ENCODE measurements at regions of chr13 and their contacts with region 1.

Region 1: GRCh38 chr13:33610471-33611015 is 207.4 kb upstream of the RFC3 start:
- DNase-seq: peak; percentile 79
- H3K4me3 Mint-ChIP-seq: peak overlapping the region; percentile 89
- H3K27ac Mint-ChIP-seq: peak overlapping the region; percentile 87
- H3K4me1 Mint-ChIP-seq: peaks cover 38% of the 10 kb centered on the region
- H3K27me3 Mint-ChIP-seq: no peaks in the 10 kb centered on the region

Region 2: DNA sequence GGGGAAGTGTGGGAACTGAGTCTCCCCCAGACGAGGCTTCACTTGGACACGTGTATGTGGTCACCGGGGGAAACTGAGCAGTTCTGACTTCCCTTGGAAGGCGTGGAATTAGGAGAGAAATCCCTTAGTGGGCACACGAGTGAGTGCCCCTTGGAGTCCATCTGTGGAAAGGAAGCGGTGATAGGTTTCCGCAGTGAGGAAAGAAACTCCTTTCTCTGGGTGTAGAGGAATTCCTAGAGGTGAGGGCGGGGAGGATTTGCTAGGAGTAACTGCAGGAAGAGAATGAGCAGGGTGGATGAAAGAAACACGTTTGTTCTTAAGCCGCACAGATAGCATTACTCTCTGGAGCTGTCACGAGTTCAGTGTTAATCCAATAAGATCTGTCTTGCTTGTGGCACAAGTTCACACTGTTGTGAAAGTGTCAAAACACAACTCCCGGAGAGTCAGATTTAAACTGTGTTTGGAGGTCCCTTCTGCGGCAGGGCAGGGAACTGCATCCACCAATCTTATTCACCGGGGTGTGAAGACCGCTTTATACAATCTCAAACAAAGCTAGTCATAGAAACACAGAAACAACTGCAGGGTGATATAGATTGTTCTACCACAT is 593.1 kb before region 1 on chr13:
- intact Hi-C with region 1: loop called (anchors 10 kb)
- DNase-seq: peak; percentile 84
- H3K4me3 Mint-ChIP-seq: peak overlapping the region; percentile 76
- H3K27ac Mint-ChIP-seq: peak overlapping the region; percentile 68
- H3K4me1 Mint-ChIP-seq: peaks cover 11% of the 10 kb centered on the region
- H3K27me3 Mint-ChIP-seq: peaks cover 59% of the 10 kb centered on the region

Region 3: DNA sequence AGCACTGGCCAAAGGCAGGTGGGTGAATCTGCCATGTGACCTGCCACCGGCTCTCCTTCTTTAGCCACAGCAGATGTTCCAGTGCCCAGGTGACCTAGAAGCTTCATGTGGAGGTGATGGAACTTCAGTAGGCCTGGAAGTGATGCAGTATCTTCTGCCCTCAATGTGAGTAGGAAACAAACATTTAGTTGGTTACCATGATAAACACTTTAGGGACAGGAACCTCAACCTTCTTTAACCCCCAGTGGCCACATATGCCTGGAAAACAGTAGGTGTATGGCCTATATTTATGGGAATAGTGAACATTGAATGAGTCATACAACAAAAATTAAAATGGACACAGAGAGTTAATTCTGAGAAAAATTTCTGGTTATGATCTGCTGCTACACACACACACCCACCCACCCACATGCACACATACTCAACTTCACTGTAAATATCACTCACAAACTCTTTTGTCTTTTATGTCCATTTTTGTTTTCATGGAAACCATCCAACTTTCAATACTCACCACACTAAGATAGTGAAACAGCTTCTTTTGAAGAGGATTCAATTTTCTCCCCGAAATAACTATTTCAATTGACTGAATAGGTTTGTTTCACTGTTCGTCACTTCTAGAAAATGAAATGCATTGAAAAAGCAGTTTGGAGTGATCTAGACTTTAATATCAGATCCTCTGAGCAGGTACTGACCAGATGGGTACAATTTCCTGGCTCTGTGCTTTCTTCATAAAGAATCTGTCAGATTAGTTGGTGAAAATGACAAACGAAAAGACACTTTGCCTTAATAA is 422.3 kb before region 1 on chr13:
- intact Hi-C with region 1: loop called (anchors 2 kb)
- DNase-seq: peak; percentile 59
- H3K4me3 Mint-ChIP-seq: peak overlapping the region; percentile 13
- H3K27ac Mint-ChIP-seq: peak overlapping the region; percentile 99
- H3K4me1 Mint-ChIP-seq: peaks cover 41% of the 10 kb centered on the region
- H3K27me3 Mint-ChIP-seq: no peaks in the 10 kb centered on the region

Region 4: DNA sequence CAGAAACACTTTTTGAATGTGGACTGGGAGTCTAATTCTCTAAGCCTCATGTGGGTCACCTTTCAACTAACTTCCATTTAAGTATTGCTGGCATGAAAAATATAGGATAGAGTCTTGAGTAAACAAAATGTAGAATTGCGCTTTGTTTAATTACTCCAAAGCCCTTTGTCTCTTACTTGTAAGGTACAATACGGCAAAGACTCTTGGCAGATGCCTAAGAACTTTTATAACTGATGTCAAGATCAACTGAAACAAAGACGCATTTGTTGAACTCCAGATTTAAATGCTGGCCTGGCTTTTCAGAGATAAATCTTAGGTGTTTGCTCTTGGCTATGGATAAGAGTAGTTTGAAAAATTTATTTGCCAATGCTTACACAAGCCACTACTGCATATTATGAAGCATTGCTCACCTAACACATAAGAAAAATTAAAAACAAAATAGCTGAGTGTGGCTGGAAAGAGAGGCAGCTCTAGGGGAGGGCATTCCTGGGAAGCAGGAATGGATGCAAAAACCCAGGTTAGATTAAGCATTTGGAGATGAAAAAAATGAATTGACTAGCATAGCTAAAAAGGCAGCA is 217.7 kb before region 1 on chr13:
- intact Hi-C with region 1: no loop called
- DNase-seq: no peak
- H3K4me3 Mint-ChIP-seq: no peak overlapping the region
- H3K27ac Mint-ChIP-seq: no peak overlapping the region
- H3K4me1 Mint-ChIP-seq: no peaks in the 10 kb centered on the region
- H3K27me3 Mint-ChIP-seq: no peaks in the 10 kb centered on the region

Region 5: GRCh38 chr13:33536601-33537000 is 73.9 kb before region 1 on chr13:
- intact Hi-C with region 1: no loop called
- DNase-seq: no peak
- H3K4me3 Mint-ChIP-seq: no peak overlapping the region
- H3K27ac Mint-ChIP-seq: peak overlapping the region; percentile 16
- H3K4me1 Mint-ChIP-seq: peaks cover 21% of the 10 kb centered on the region
- H3K27me3 Mint-ChIP-seq: no peaks in the 10 kb centered on the region

Region 6: DNA sequence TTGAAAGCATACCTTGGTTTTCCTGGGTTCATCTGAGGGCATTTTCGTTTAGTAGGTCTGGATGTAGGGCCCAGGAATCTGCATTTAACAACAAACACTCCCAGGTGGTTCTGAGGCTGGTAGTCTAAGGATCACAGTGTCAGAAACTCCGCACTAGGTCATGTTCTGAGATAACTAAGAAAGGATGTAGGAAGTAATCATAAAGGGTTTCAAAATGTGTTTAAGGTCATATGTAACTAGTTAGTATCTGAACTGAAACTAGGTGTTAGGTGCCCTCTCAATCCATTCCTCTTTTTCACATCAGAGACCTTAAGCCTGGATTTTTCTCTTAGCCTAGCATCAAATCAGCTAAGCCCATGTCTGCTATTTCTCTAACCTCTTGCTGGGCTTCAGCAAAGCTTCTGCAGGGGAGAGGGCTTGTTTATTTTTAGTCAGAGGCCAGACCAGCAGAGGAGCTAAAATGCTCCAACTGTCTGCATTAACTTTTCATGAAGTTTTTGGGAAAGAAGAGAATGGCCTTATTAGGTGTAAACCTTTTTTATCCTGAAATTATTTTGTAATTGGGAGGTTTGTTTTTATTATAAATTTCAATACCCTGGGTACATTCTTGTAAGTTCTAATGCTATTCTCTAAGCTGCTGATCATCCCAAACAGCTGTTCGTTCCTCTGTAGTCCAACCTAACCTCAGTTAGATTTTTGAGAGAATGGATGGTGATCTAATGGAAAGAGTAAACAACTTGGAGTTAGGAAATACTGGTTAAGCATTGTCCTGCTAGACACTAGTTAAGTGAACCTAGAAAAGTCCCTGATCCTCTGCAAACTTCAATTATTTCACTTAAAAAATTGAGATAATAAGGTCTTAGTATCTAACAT is 55.4 kb before region 1 on chr13:
- intact Hi-C with region 1: loop called (anchors 2 kb)
- DNase-seq: no peak
- H3K4me3 Mint-ChIP-seq: no peak overlapping the region
- H3K27ac Mint-ChIP-seq: peak overlapping the region; percentile 11
- H3K4me1 Mint-ChIP-seq: peaks cover 13% of the 10 kb centered on the region
- H3K27me3 Mint-ChIP-seq: no peaks in the 10 kb centered on the region

Region 7: GRCh38 chr13:33639626-33640080 is 29.1 kb after region 1 on chr13:
- intact Hi-C with region 1: loop called (anchors 1 kb)
- DNase-seq: peak; percentile 65
- H3K4me3 Mint-ChIP-seq: no peak overlapping the region
- H3K27ac Mint-ChIP-seq: peak overlapping the region; percentile 61
- H3K4me1 Mint-ChIP-seq: peaks cover 39% of the 10 kb centered on the region
- H3K27me3 Mint-ChIP-seq: no peaks in the 10 kb centered on the region

Region 8: GRCh38 chr13:33723772-33724435 is 113.4 kb after region 1 on chr13:
- intact Hi-C with region 1: loop called (anchors 1 kb)
- DNase-seq: peak; percentile 90
- H3K4me3 Mint-ChIP-seq: no peak overlapping the region
- H3K27ac Mint-ChIP-seq: peak overlapping the region; percentile 76
- H3K4me1 Mint-ChIP-seq: peaks cover 26% of the 10 kb centered on the region
- H3K27me3 Mint-ChIP-seq: no peaks in the 10 kb centered on the region

Region 9: DNA sequence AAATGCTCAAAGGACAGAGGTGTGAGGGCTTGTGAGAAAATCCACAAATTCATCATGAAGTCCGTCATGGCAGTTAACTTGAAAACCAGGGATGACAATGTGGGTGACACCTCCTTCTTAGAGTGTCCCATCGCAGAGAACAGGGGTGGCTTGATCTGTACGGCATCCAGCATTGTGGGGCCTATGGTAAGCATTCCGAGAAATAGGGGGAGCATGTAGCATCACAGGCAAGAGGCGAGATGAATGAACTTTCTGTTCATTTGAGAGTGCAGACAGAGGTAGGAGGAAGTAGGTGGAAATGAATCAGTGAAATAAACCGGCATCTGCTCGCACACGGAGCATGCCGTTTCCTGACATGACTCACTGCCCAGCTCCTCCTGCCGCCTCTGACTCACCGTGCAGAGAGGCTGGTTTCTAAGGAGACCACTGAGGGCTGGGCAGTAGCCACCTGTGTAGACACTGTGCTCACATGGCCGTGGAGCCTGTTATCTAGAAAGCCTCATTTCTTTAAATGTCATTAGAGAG is 546.4 kb after region 1 on chr13:
- intact Hi-C with region 1: loop called (anchors 10 kb)
- DNase-seq: peak; percentile 84
- H3K4me3 Mint-ChIP-seq: peak overlapping the region; percentile 71
- H3K27ac Mint-ChIP-seq: peak overlapping the region; percentile 85
- H3K4me1 Mint-ChIP-seq: peaks cover 19% of the 10 kb centered on the region
- H3K27me3 Mint-ChIP-seq: peaks cover 17% of the 10 kb centered on the region